Dorsolateral prefrontal cortex (tissue), 120 donors: ENCODE measurements at regions of chr1 and their contacts with region 1.

Region 1: GRCh38 chr1:244652699-244653466 is at the start of gene DESI2:
- DNase-seq: peak; percentile 96 to 100 (median 99)
- H3K4me3 ChIP-seq: peak within 1 kb of the TSS; percentile 67 to 99 (median 90)
- H3K27ac ChIP-seq: peak within 1 kb of the TSS; percentile 63 to 97 (median 92)
- H3K27me3 ChIP-seq: no peaks in the 10 kb centered on the region
- CTCF ChIP-seq: peak; percentile 8 to 77 (median 56)
- total RNA-seq, gene DESI2: 8.3 to 17.4 (median 11.9) TPM

Region 2: DNA sequence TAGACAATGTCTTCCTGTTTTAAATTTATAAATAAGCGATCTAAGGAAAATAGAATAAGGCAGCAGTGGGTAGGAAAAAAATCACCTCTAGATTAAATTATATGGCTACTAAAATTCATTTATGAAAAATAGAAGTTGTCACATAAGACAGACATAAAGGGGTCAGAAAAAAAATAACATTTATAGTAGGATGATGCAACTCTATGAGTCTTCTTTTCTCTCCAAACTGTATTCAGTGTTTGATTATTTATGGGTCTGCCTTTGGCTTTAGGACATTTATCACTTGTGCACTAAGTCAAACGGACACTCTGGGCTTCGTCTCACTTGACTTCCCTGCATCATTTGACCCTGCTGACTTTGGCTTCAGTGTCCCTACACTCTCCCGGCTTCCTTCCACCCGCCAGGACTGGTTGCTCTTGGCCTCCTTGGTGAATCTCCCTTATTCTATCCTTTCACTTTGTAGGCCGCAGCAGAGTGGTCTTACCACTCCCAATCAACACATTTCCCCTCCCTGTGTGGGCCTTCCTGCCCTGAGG is 47.0 kb before region 1 on chr1:
- intact Hi-C with region 1: loop called in 1 of 2 experiments (anchors 5 kb)
- DNase-seq: no peak
- H3K4me3 ChIP-seq: no peak overlapping the region
- H3K27ac ChIP-seq: no peak overlapping the region
- H3K27me3 ChIP-seq: no peaks in the 10 kb centered on the region
- CTCF ChIP-seq: no peak

Region 3: DNA sequence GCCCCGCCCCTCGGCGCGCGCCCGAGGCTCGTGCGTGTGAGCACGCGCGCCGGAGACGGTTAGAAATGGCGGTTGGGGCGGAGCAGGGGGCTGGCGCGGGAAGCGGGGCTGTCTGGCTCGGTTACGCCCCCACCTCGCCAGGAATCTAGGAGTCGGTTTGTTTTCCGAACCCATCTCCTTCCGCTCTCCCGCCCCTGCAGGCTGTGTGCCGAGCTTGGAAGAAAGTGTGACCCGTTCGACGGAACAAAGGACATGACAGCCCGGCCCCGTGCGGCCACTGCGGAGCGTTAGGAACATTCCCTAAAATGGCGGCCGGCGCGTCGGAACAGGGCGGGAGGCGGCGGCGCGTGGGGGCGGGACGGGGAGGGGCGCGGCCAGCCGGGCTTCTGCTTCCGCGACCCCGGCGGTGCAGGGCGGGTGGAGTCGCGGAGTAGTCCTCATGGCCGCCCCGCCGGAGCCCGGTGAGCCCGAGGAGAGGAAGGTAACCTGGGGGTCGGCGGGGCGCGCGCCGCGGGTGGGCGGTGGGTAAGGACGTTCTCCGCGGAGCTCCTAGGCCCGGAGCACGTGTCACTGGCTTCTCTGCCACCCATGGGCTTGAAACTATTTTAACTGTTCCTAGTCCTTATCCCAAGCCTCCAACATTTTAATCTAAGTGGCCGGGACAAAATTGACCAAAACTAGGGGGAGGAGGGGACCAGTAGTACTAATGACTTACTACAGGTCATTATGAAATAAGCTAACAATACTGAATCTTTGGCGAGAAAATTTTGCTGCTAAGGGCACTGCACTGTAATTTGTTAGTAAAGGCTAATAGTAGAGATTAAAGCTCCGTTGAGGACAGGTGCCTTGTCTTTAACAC is 182.6 kb after region 1 on chr1 and contains the start of gene COX20:
- intact Hi-C with region 1: loop called (anchors 1 to 10 kb)
- DNase-seq: peak; percentile 70 to 88 (median 82)
- H3K4me3 ChIP-seq: peak within 1 kb of the TSS; percentile 50 to 90 (median 78)
- H3K27ac ChIP-seq: peak within 1 kb of the TSS; percentile 96 to 100 (median 100)
- H3K27me3 ChIP-seq: no peaks in the 10 kb centered on the region
- CTCF ChIP-seq: peak in 18 of 56 donors; percentile 4 to 38 (median 15)
- total RNA-seq, gene COX20: 23.7 to 50.5 (median 37.6) TPM

Region 4: DNA sequence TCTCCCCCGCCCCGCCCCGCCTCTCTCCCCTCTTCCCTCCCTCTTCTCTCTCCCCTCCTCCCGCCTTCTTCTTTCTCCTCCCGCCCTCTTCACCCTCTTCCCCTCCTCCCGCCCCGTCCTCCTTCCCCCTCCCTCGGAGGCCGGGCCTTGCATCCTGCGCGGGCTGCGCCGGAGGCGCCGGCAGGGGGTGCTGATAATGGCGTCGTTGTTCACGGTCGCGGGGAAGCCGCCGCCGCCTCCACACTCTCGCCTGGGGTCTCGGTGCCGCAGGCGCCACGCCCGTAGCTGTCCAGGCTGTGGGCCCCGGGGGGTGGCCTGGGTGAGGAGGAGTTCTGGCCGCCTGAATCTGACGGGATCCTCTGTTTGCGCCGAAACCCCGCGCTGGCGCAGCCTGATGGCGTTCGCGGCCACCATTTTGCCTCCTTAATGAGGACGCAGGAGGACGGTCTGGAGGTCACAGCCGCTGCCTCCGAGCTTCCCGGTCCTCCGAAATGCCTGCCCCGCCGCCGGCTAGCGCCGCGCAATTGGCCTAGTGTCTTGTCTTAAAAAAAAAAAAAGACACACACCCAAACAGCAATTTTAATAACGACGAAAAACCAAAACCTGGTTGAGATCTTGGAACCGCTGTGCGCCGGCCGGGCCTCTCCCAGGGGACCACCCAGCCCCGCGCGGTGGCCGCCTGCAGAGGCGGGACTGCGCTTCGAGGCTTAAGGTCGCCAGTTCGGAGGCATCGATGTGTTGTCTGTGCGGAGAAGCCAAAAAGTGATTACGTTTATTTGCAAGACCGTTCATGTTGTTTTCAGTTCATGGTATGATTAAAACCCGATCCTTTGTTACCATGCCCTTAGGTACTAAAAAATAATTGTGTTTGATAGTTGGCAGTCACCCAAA is 318.0 kb after region 1 on chr1:
- intact Hi-C with region 1: loop called (anchors 2 kb)
- DNase-seq: peak; percentile 87 to 95 (median 93)
- H3K4me3 ChIP-seq: peak overlapping the region; percentile 56 to 89 (median 79)
- H3K27ac ChIP-seq: peak overlapping the region; percentile 96 to 100 (median 100)
- H3K27me3 ChIP-seq: no peaks in the 10 kb centered on the region
- CTCF ChIP-seq: peak in 55 of 56 donors; percentile 27 to 77 (median 56)